ENCODE measurements at regions of chr2 and their contacts with region 1.

Region 1: GRCh38 chr2:159615140-159615951 is 1.0 kb downstream of the BAZ2B start:
- DNase-seq: peak; percentile 97
- H3K4me3 ChIP-seq: peak overlapping the region; percentile 76 to 84 (median 77)
- H3K27ac ChIP-seq: peak overlapping the region; percentile 97 to 98 (median 97)
- H3K4me1 ChIP-seq: peaks cover 21 to 51% (median 38%) of the 10 kb centered on the region in 4 donors
- H3K27me3 ChIP-seq: no peaks in the 10 kb centered on the region
- CTCF ChIP-seq: no peak
- EP300 ChIP-seq: no peak
- POLR2A ChIP-seq: peak; percentile 22

Region 2: DNA sequence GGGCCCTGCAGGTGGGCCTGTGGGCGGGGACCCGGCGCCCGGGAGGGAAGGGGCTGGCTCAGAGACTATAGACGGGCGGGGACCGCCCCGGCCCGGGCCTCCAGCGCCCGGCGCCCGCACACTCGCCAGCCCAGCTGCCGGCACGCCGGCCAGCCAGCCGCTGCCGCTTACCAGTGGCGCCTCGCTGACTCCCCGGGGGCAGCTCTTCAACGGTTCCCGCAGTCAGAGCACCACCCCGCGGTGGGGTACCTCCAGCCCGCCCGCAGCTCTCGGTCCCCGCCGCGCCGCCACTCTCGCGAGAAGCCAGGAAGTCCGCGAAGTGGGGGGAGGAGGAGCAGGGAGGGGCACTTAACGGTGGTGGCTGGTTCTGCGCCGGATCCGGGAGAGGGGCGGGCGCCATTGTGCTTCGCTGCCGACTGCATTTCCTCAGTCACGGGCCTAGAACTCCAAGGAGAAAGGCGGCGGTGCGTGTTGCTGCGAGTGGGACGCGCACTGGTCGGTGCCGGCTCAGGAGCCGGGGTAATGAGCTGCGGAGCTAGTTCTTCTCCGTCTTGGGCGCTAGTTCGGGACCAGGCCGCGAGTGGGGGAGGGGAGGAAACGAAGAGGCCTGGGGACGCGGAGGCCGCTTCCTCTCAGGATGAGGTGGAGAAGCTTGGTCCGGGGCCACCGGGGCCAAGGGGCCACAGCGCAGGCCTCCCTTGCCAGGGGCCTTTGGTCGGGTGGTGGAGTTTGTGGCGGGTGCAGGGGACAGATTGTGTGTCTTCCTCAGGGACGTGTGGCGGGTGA is 97.0 kb after region 1 on chr2 and contains the start of gene MARCHF7:
- intact Hi-C with region 1: loop called (anchors 2 kb)
- DNase-seq: peak; percentile 99
- H3K4me3 ChIP-seq: peak within 1 kb of the TSS; percentile 92 to 98 (median 94)
- H3K27ac ChIP-seq: peak within 1 kb of the TSS; percentile 96 to 99 (median 98)
- H3K4me1 ChIP-seq: peaks cover 38 to 53% (median 51%) of the 10 kb centered on the region in 4 donors
- H3K27me3 ChIP-seq: no peaks in the 10 kb centered on the region
- CTCF ChIP-seq: peak; percentile 50 to 59 (median 52)
- EP300 ChIP-seq: no peak
- POLR2A ChIP-seq: peak; percentile 89
- total RNA-seq, gene MARCHF7: 60.1 to 101 (median 89.4) TPM

Region 3: DNA sequence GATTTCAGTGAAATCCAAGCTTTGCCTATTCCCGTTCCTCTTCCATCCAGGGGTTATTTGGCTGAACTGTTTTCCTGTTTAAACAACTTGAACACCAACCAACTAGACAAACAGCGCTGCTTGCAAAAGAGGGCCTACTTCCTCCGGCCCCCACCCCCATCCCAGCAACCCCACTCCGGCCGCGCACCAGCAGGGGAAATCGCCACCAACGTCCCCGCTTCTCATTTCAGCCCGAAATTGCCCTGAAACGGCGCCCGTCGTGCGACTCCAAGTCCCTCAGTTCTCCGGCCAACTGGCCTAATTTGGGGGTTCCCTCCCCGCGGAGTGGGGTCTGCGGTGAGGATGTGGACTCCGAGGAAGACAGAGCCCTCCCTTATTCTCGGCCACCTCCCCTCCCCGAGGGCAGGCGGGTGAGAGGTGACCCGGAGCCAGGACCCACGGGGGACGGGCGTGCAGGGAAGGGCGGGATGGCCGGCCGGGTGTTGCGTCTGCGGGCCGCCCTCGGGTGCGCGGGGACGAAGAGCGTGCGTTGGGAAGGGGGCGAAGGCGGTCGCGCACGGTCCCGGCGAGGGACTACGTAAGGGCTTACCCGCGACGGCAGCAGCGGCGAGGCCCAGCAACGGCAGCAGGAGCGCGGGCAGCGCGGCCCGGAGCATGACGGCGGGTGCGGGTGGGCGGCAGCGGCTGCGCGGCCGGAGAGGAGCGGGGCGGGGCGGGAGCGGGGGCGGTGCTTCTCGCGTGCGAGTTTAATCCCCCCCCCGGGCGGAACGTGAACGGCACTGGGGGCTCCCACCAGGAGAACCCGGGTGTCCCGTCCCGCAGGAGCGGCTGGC is 182.4 kb after region 1 on chr2 and contains the start of gene CD302:
- intact Hi-C with region 1: loop called (anchors 10 kb)
- DNase-seq: peak; percentile 92
- H3K4me3 ChIP-seq: peak within 1 kb of the TSS; percentile 73 to 90 (median 79)
- H3K27ac ChIP-seq: peak within 1 kb of the TSS; percentile 76 to 84 (median 79)
- H3K4me1 ChIP-seq: peaks cover 11 to 34% (median 18%) of the 10 kb centered on the region in 4 donors
- H3K27me3 ChIP-seq: no peaks in the 10 kb centered on the region
- CTCF ChIP-seq: no peak
- EP300 ChIP-seq: no peak
- POLR2A ChIP-seq: no peak
- total RNA-seq, gene CD302: 30.8 to 46.9 (median 34.9) TPM

Measured in esophagus muscularis mucosa (tissue), 4 donors.